ENCODE measurements at regions of chr16 and their contacts with region 1.

Region 1: GRCh38 chr16:50266337-50267091 is at the start of gene ADCY7:
- DNase-seq: peak; percentile 66 to 88 (median 78)
- ATAC-seq: peak; percentile 93 to 94 (median 93)
- H3K4me3 ChIP-seq: peak within 1 kb of the TSS; percentile 91 to 95
- H3K4me3 Mint-ChIP-seq: peak within 1 kb of the TSS; percentile 85 to 95 (median 94)
- H3K27ac ChIP-seq: peak within 1 kb of the TSS; percentile 80
- H3K27ac Mint-ChIP-seq: peak within 1 kb of the TSS; percentile 98 to 99
- H3K4me1 ChIP-seq: peaks cover 33 to 64% of the 10 kb centered on the region in 2 experiments
- H3K4me1 Mint-ChIP-seq: peaks cover 67 to 74% (median 74%) of the 10 kb centered on the region in 3 donors
- H3K27me3 ChIP-seq: no peaks in the 10 kb centered on the region
- H3K27me3 Mint-ChIP-seq: no peaks in the 10 kb centered on the region
- total RNA-seq, gene ADCY7: 201 to 314 (median 278) TPM

Region 2: DNA sequence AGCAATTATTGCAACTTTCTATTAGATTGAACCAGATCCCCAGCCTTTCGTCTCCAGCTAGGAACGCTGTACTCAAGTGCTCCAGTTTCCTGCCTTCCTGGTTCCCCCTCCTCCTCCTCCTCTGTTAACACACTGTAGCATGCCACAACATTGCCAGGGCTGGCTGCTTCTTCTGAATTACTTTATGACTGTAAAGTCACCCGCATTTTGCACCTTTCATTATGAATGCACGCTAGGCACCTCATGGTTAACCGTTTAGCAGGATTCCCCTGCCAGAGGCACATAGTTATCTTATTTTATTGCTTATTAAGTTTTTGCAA is 415.1 kb before region 1 on chr16:
- CTCF ChIA-PET with region 1: no interaction called
- POLR2A ChIA-PET with region 1: no interaction called
- DNase-seq: no peak
- ATAC-seq: no peak
- H3K4me3 ChIP-seq: no peak overlapping the region
- H3K4me3 Mint-ChIP-seq: no peak overlapping the region
- H3K27ac ChIP-seq: no peak overlapping the region
- H3K27ac Mint-ChIP-seq: no peak overlapping the region
- H3K4me1 ChIP-seq: peaks cover 0 to 13% of the 10 kb centered on the region in 2 experiments
- H3K4me1 Mint-ChIP-seq: peaks cover 0 to 5% (median 3%) of the 10 kb centered on the region in 3 donors
- H3K27me3 ChIP-seq: peaks cover 0 to 46% of the 10 kb centered on the region in 2 experiments
- H3K27me3 Mint-ChIP-seq: peaks cover 42 to 54% of the 10 kb centered on the region in 2 donors

Region 3: GRCh38 chr16:50276801-50277555 is 10.5 kb after region 1 on chr16:
- CTCF ChIA-PET with region 1: interaction called, 7 to 10 read pairs
- POLR2A ChIA-PET with region 1: interaction called, 3 to 5 read pairs
- DNase-seq: no peak
- ATAC-seq: no peak
- H3K4me3 ChIP-seq: no peak overlapping the region
- H3K4me3 Mint-ChIP-seq: peak overlapping the region; percentile 18 to 85 (median 42)
- H3K27ac ChIP-seq: peak overlapping the region; percentile 93
- H3K27ac Mint-ChIP-seq: peak overlapping the region; percentile 87 to 99
- H3K4me1 ChIP-seq: peaks cover 65 to 94% of the 10 kb centered on the region in 2 experiments
- H3K4me1 Mint-ChIP-seq: peaks cover 89 to 99% (median 98%) of the 10 kb centered on the region in 3 donors
- H3K27me3 ChIP-seq: no peaks in the 10 kb centered on the region
- H3K27me3 Mint-ChIP-seq: no peaks in the 10 kb centered on the region

Measured in T-cell (primary cell).